Endothelial cell of umbilical vein (primary cell): ENCODE measurements at regions of chrX and their contacts with region 1.

Region 1: GRCh38 chrX:120560842-120561633 is at the start of gene CUL4B:
- DNase-seq: peak; percentile 95
- H3K4me3 ChIP-seq: peak within 1 kb of the TSS; percentile 81 to 99 (median 98)
- H3K27ac ChIP-seq: peak within 1 kb of the TSS; percentile 94
- H3K4me1 ChIP-seq: peaks cover 22% of the 10 kb centered on the region
- H3K27me3 ChIP-seq: no peaks in the 10 kb centered on the region
- CTCF ChIP-seq: no peak
- POLR2A ChIP-seq: peak; percentile 75
- total RNA-seq, gene CUL4B: 84.3 and 90.0 TPM in 2 replicates

Region 2: DNA sequence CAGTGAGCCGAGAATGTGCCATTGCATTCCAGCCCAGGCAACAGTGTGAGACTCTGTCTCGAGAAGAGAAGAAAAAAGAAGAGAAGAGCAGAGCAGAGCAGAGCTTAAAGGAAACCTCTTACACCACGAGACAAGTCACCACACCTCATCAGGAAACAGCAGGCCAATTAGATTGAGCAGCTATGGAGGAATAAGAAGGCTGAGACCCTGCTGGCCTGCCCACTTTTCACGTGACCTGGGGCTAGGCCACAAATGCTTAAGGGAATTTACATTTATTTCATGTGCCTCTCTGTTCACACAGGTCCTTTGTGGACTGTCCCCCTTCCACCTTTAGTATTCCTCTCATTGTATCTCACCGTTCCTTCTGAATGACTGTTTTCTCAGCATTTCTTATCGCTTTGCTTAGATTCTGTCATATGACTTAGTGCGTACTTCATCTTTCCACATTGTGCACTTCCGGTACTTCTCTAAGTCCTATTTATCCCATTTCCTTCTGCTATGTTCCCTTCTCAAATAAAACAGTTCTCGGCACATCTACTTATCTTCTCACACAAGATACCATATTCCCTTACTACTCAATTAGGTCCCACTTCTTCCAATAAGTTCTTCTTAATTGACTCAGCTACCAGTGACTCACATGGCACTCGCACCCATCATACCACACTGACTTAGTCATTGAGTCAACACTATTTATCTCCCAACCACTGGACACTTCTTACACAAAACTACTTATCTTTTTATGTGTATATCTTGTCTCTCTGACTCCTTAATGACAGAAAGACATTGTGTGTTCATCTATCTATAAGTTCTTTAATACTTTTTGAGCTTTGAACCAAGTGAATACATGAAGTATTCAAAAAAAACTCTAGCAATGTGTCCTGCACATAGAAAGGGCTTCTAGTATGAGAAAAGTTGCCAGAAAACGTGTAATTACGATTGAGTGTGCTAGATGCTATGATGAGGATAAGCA is 11.3 kb before region 1 on chrX:
- CTCF ChIA-PET with region 1: interaction called, 6 read pairs
- POLR2A ChIA-PET with region 1: interaction called, 9 read pairs
- dilution Hi-C with region 1: no loop called
- intact Hi-C with region 1: loop called (anchors 1 kb)
- DNase-seq: peak; percentile 82
- H3K4me3 ChIP-seq: peak overlapping the region in 1 of 3 experiments; percentile 17
- H3K27ac ChIP-seq: peak overlapping the region; percentile 81
- H3K4me1 ChIP-seq: peaks cover 41% of the 10 kb centered on the region
- H3K27me3 ChIP-seq: no peaks in the 10 kb centered on the region
- CTCF ChIP-seq: no peak
- POLR2A ChIP-seq: peak; percentile 55

Region 3: DNA sequence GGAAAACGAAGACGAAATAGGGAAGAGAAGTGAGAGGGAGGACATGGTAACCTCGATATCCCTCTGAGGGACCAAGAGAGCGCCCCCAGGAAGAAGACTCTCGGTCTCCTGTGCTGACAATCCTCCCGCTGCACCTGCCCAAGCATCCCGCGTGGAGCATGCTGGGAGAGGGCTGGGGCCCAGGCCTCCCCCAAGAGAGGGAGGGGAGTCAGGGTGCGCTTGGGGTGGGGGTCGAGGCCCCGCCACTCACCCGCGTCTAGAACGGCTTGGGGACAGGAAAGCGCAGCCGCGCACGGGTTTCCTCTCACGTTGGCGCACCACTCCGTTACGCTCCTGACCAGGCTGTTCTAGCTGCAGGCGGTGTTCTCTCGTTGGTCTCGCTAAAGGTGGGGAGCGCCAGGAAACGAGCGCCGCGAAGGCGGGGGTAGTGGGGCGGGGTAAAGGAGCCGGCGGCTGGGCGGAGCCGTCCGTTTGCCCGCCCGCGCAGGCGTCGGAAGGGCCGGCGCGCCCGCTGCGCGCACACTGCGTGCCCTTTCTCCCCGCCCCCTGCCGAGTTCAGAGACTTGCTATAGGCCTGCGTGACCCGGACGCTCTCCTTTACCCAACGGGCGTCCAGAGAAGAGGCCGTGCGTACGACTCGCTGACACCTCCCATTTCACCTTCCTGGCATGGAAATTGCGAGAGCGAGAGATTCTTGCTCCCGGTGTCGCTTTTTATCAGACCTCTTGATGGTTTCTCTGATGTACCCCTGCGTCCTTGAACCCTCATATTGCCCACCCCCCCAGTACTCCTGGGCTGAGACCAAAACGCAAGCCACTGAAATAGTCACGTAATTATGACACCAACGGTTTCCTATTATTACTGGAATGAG is 68.9 kb after region 1 on chrX and contains the start of gene C1GALT1C1:
- CTCF ChIA-PET with region 1: no interaction called
- POLR2A ChIA-PET with region 1: interaction called, 6 read pairs
- dilution Hi-C with region 1: no loop called
- intact Hi-C with region 1: loop called (anchors 1 kb)
- DNase-seq: peak; percentile 93
- H3K4me3 ChIP-seq: peak within 1 kb of the TSS; percentile 62 to 89 (median 85)
- H3K27ac ChIP-seq: peak within 1 kb of the TSS; percentile 68
- H3K4me1 ChIP-seq: peaks cover 3% of the 10 kb centered on the region
- H3K27me3 ChIP-seq: no peaks in the 10 kb centered on the region
- CTCF ChIP-seq: no peak
- POLR2A ChIP-seq: peak; percentile 82
- total RNA-seq, gene C1GALT1C1: 32.9 and 34.6 TPM in 2 replicates

Region 4: DNA sequence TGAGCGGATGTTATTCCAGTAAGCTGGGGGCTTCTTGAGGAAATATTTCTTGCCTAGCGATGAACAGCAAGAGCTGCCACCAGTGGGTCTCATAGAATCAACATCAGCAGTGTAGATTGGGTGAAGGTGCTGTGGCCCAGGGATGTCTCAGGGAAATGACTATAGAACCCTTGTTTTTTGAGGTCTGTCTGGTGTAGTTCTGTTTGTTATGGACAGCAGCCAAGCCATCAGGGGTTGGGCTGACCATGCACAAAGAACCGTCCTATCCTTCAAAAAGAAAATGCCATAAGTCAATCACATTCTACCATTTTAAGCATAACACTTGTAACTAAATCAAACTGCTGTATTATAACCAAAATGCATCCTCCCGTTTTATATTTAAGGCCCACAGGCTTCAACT is 86.1 kb after region 1 on chrX:
- CTCF ChIA-PET with region 1: no interaction called
- POLR2A ChIA-PET with region 1: no interaction called
- dilution Hi-C with region 1: no loop called
- intact Hi-C with region 1: no loop called
- DNase-seq: peak; percentile 17
- H3K4me3 ChIP-seq: no peak overlapping the region
- H3K27ac ChIP-seq: no peak overlapping the region
- H3K4me1 ChIP-seq: peaks cover 9% of the 10 kb centered on the region
- H3K27me3 ChIP-seq: no peaks in the 10 kb centered on the region
- CTCF ChIP-seq: no peak
- POLR2A ChIP-seq: no peak

Region 5: GRCh38 chrX:120736989-120737388 is 176.0 kb after region 1 on chrX:
- CTCF ChIA-PET with region 1: no interaction called
- POLR2A ChIA-PET with region 1: interaction called, 3 read pairs
- dilution Hi-C with region 1: no loop called
- intact Hi-C with region 1: loop called (anchors 5 kb)
- DNase-seq: peak; percentile 80
- H3K4me3 ChIP-seq: no peak overlapping the region
- H3K27ac ChIP-seq: peak overlapping the region; percentile 49
- H3K4me1 ChIP-seq: peaks cover 28% of the 10 kb centered on the region
- H3K27me3 ChIP-seq: no peaks in the 10 kb centered on the region
- CTCF ChIP-seq: no peak
- POLR2A ChIP-seq: peak; percentile 26